ENCODE measurements at regions of chr15 and their contacts with region 1.

Region 1: GRCh38 chr15:85672332-85673084 is 122.2 kb downstream of the KLHL25 start:
- DNase-seq: no peak
- ATAC-seq: peak; percentile 39

Region 2: GRCh38 chr15:85625856-85626255 is 46.7 kb before region 1 on chr15:
- intact Hi-C with region 1: loop called (anchors 10 kb)
- DNase-seq: no peak
- ATAC-seq: peak; percentile 23